ENCODE measurements at regions of chrX and their contacts with region 1.

Region 1: GRCh38 chrX:20270562-20270890 is 3.8 kb upstream of the RPS6KA3 start:
- DNase-seq: no peak
- H3K4me3 ChIP-seq: no peak overlapping the region
- H3K27ac ChIP-seq: no peak overlapping the region
- H3K4me1 ChIP-seq: no peaks in the 10 kb centered on the region
- H3K27me3 ChIP-seq: peaks cover 0 to 25% of the 10 kb centered on the region in 2 donors
- CTCF ChIP-seq: no peak
- POLR2A ChIP-seq: no peak

Region 2: GRCh38 chrX:18855919-18856644 is 1414.4 kb before region 1 on chrX:
- intact Hi-C with region 1: no loop called
- DNase-seq: no peak
- H3K4me3 ChIP-seq: no peak overlapping the region
- H3K27ac ChIP-seq: no peak overlapping the region
- H3K4me1 ChIP-seq: no peaks in the 10 kb centered on the region
- H3K27me3 ChIP-seq: peaks cover 0 to 3% of the 10 kb centered on the region in 2 donors
- CTCF ChIP-seq: no peak
- POLR2A ChIP-seq: no peak

Region 3: DNA sequence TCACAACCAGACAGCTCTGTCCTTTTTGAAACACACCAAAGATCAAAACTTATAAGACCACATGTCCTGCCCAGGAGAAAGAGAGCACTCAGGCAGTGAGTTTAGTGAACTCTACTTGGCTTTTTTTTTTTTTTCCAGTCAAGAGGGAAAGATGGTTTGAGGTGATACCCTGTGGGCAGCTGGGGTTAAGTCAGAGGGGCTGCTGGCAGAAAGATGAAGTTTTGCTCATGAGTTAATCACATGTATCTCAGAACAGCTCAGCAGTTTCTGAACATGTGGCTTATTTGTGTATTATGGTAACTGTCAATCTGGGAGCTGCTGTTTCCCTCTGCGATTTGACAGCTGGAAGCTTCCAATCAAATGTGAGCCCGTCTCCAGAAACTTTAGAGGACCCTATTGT is 698.8 kb before region 1 on chrX:
- intact Hi-C with region 1: loop called (anchors 5 kb)
- DNase-seq: no peak
- H3K4me3 ChIP-seq: no peak overlapping the region
- H3K27ac ChIP-seq: no peak overlapping the region
- H3K4me1 ChIP-seq: no peaks in the 10 kb centered on the region
- H3K27me3 ChIP-seq: peaks cover 0 to 4% of the 10 kb centered on the region in 2 donors
- CTCF ChIP-seq: no peak
- POLR2A ChIP-seq: no peak

Region 4: GRCh38 chrX:20285513-20285912 is 15.0 kb after region 1 on chrX:
- intact Hi-C with region 1: no loop called
- DNase-seq: no peak
- H3K4me3 ChIP-seq: no peak overlapping the region
- H3K27ac ChIP-seq: no peak overlapping the region
- H3K4me1 ChIP-seq: no peaks in the 10 kb centered on the region
- H3K27me3 ChIP-seq: peaks cover 0 to 11% of the 10 kb centered on the region in 2 donors
- CTCF ChIP-seq: no peak
- POLR2A ChIP-seq: no peak

Region 5: DNA sequence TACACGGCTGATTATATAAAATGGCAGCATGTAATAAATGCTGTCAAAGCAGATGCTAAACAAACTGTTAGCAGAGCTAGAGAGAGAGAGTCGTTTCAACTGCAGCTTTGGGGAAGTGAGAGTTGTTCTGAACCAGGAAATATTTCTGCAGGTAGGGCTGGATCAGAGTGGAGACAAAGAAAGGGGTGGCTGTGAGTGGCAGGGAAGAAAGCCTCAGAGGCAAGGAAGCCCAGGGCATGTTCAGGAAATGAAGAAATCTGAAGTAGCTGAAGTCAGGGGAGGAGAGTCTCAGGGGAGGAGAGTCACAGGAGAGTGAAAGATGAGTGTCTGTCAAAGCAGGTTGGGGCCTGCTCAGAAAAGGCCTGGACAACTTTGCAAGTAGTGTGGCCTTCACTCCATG is 44.6 kb after region 1 on chrX:
- intact Hi-C with region 1: no loop called
- DNase-seq: no peak
- H3K4me3 ChIP-seq: no peak overlapping the region
- H3K27ac ChIP-seq: no peak overlapping the region
- H3K4me1 ChIP-seq: no peaks in the 10 kb centered on the region
- H3K27me3 ChIP-seq: peaks cover 0 to 11% of the 10 kb centered on the region in 2 donors
- CTCF ChIP-seq: no peak
- POLR2A ChIP-seq: no peak